SK-N-SH (cell line): ENCODE measurements at regions of chr14 and their contacts with region 1.

Region 1: GRCh38 chr14:91170504-91171121 is 56.7 kb downstream of the DGLUCY start:
- DNase-seq: peak; percentile 51
- H3K4me3 ChIP-seq: no peak overlapping the region
- H3K27ac ChIP-seq: peak overlapping the region; percentile 16 to 99; a peak in 3 of 4 replicates
- H3K4me1 ChIP-seq: peaks cover 0 to 42% of the 10 kb centered on the region in 2 experiments; a peak in 1 of 4 replicates
- H3K27me3 ChIP-seq: no peaks in the 10 kb centered on the region
- CTCF ChIP-seq: no peak
- EP300 ChIP-seq: peak in 1 of 2 experiments; percentile 39; a peak in 2 of 4 replicates
- RAD21 ChIP-seq: no peak; the same call in 1 of the 2 replicates

Region 2: DNA sequence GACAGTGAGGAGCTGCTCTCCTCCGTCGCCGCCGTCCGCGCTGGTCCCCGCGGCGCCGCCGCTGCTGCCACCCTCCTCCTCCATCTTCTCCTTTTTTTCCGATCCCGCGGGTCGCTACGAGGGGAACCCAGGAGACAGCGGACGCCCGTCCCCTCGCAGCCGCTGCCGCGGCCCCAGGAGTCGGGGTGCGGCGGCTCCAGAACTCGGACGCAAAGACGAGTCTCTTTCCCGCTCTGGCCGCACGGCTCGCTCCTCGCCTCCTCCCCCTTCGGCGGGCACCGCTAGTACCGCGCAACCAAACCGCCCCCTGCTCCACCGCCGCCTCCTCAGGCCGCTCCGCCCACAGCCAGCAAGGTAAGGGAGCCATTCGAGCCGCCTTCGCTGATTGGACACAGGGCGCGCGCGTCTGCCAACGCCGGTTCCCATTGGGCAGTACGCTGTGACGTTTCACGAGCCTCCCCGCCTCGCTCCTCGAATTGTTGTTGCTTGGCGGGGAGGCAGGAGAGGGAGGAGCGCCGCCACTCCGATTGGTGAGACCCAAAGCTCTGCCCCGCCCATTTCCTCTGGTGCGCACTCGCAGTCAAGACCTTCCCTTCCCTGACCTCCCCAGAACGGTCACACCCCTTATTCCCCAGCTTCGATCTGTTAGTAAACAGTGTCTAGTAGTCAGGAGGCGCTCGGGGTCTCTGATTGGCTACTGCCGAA is 110.1 kb before region 1 on chr14 and contains the start of gene RPS6KA5:
- CTCF ChIA-PET with region 1: interaction called, 30 read pairs
- POLR2A ChIA-PET with region 1: interaction called, 11 read pairs
- DNase-seq: peak; percentile 92
- H3K4me3 ChIP-seq: peak within 1 kb of the TSS; percentile 68 to 93
- H3K27ac ChIP-seq: peak within 1 kb of the TSS; percentile 88 to 97
- H3K4me1 ChIP-seq: peaks cover 0 to 7% of the 10 kb centered on the region in 2 experiments; a peak in 3 of 4 replicates
- H3K27me3 ChIP-seq: no peaks in the 10 kb centered on the region
- CTCF ChIP-seq: no peak
- EP300 ChIP-seq: peak in 1 of 2 experiments; percentile 56; a peak in 1 of 4 replicates
- RAD21 ChIP-seq: peak; percentile 30; the same call in 1 of the 2 replicates
- polyA plus RNA-seq, gene RPS6KA5: 0.67 and 0.78 TPM in 2 replicates

Region 3: DNA sequence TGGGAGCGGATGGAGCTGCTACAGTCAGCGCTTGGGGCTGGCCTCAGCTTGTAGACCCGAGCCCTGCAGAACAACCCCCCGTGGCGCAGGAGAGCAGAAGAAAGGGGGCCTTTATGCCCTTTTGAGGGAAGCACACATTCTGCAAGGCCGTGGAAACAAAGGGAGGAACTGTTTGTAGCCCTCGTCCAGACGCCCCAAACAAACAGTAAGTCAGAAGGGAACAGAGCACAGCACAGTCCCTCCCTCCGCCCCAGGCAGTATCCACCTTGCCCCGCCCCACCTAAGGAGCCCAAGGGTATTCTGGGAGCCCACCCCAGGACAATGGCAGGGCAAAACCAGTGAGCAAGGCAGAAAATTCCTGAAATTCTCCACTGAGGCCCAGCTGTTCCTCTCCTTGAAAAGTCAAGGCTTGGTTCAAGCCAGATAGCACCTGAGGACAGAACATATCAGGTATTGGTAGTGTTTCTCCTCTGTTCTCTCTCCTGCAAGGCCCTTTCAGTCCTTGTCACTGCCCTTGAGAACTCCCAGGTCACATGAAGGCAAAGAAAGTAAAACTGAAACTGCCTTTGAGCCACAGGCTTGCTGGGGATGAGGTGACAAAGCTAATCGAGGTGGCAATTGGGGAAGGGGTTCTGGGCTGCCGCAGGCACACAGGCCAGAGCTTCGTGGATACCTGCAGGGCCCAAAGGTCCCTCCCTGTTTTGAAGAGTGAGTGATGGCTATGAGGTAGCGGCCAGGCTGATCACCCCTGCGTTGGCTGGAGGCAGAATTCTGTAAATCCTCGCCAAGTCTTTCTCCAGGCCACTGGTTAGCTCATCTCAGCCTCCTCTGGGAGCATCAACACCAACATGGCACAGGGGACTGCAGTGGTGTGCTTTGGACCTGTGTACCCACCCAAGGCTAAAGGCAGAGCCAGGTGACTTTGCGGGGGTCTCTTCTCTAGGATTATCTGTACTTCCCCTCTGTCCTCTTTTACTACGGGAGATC is 56.2 kb before region 1 on chr14:
- CTCF ChIA-PET with region 1: interaction called, 10 read pairs
- POLR2A ChIA-PET with region 1: no interaction called
- DNase-seq: peak; percentile 29
- H3K4me3 ChIP-seq: peak overlapping the region; percentile 54 to 67
- H3K27ac ChIP-seq: peak overlapping the region; percentile 37 to 84; a peak in 3 of 4 replicates
- H3K4me1 ChIP-seq: peaks cover 6 to 28% of the 10 kb centered on the region in 2 experiments; a peak in 3 of 4 replicates
- H3K27me3 ChIP-seq: no peaks in the 10 kb centered on the region
- CTCF ChIP-seq: no peak
- EP300 ChIP-seq: no peak
- RAD21 ChIP-seq: 0 out of 2 replicates have a peak, but pooled peaks have one; percentile 4

Region 4: GRCh38 chr14:91249841-91250616 is 79.4 kb after region 1 on chr14:
- CTCF ChIA-PET with region 1: interaction called, 30 read pairs
- POLR2A ChIA-PET with region 1: interaction called, 11 read pairs
- DNase-seq: peak; percentile 88
- H3K4me3 ChIP-seq: no peak overlapping the region
- H3K27ac ChIP-seq: peak overlapping the region; percentile 24 to 99; a peak in 3 of 4 replicates
- H3K4me1 ChIP-seq: peaks cover 0 to 68% of the 10 kb centered on the region in 2 experiments; a peak in 2 of 4 replicates
- H3K27me3 ChIP-seq: no peaks in the 10 kb centered on the region
- CTCF ChIP-seq: no peak
- EP300 ChIP-seq: peak in 1 of 2 experiments; percentile 90; a peak in 2 of 4 replicates
- RAD21 ChIP-seq: peak; percentile 48